ENCODE measurements at regions of chrX and their contacts with region 1.

Region 1: DNA sequence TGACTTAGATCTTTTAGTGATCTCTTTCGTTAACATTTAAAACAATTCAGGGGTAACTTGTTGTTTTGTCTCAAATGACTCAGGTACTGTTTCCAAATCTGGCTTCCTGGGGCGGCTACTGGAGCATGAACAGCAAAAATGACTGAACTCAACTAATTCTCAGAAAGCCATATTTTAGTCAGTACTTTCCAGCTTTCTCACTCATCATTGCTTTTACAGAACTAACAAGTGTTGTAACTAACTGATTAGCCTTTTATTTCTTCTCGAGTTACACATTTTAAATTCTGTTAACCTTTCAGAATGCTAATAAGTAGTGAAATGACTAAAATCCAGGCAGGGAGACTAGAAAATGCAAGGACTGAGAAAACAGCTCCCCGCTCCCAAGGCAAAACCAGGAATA is 55.3 kb downstream of the JADE3 start:
- DNase-seq: peak; percentile 38
- H3K4me3 Mint-ChIP-seq: no peak overlapping the region
- H3K27ac Mint-ChIP-seq: no peak overlapping the region
- H3K4me1 Mint-ChIP-seq: peaks cover 11% of the 10 kb centered on the region
- H3K27me3 Mint-ChIP-seq: peaks cover 3% of the 10 kb centered on the region

Region 2: GRCh38 chrX:46683038-46683437 is 284.5 kb before region 1 on chrX:
- CTCF ChIA-PET with region 1: no interaction called
- intact Hi-C with region 1: no loop called
- DNase-seq: no peak
- H3K4me3 Mint-ChIP-seq: no peak overlapping the region
- H3K27ac Mint-ChIP-seq: no peak overlapping the region
- H3K4me1 Mint-ChIP-seq: peaks cover 11% of the 10 kb centered on the region
- H3K27me3 Mint-ChIP-seq: no peaks in the 10 kb centered on the region

Region 3: GRCh38 chrX:46819136-46819535 is 148.4 kb before region 1 on chrX:
- CTCF ChIA-PET with region 1: no interaction called
- intact Hi-C with region 1: no loop called
- DNase-seq: no peak
- H3K4me3 Mint-ChIP-seq: no peak overlapping the region
- H3K27ac Mint-ChIP-seq: no peak overlapping the region
- H3K4me1 Mint-ChIP-seq: no peaks in the 10 kb centered on the region
- H3K27me3 Mint-ChIP-seq: no peaks in the 10 kb centered on the region

Region 4: DNA sequence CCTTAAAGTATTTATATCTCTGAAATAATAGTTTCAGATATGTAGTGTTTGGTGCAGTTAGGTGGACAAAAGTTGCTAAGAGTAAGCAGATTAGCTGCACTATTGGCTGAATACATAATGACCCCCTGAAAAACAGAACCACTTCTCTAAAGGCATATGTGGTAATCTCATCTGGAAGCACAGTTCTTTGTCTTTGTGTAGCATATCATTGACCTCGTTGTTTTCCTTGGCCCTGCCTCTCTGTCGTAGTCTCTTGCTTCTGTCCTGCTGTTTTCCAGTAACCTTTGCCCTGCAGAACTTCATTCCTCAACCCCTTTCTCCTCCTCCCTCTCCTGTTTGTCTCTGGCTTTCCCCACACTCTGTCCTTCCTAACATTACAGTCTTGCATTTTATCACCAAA is 13.9 kb before region 1 on chrX:
- CTCF ChIA-PET with region 1: no interaction called
- intact Hi-C with region 1: loop called (anchors 1 kb)
- DNase-seq: no peak
- H3K4me3 Mint-ChIP-seq: no peak overlapping the region
- H3K27ac Mint-ChIP-seq: no peak overlapping the region
- H3K4me1 Mint-ChIP-seq: peaks cover 14% of the 10 kb centered on the region
- H3K27me3 Mint-ChIP-seq: no peaks in the 10 kb centered on the region